ENCODE measurements at regions of chr18 and their contacts with region 1.

Region 1: GRCh38 chr18:32018331-32019250 is at the start of gene RNF125:
- DNase-seq: peak; percentile 84 to 97 (median 89)
- ATAC-seq: peak; percentile 69
- H3K4me3 ChIP-seq: peak within 1 kb of the TSS; percentile 99
- H3K4me3 Mint-ChIP-seq: peak within 1 kb of the TSS; percentile 99
- H3K27ac ChIP-seq: peak within 1 kb of the TSS; percentile 82 to 87
- H3K27ac Mint-ChIP-seq: peak within 1 kb of the TSS; percentile 99
- H3K4me1 ChIP-seq: peaks cover 40% of the 10 kb centered on the region
- H3K4me1 Mint-ChIP-seq: peaks cover 65% of the 10 kb centered on the region
- H3K27me3 ChIP-seq: no peaks in the 10 kb centered on the region
- H3K27me3 Mint-ChIP-seq: no peaks in the 10 kb centered on the region
- CTCF ChIP-seq: no peak
- total RNA-seq, gene RNF125: 107 to 112 TPM

Region 2: DNA sequence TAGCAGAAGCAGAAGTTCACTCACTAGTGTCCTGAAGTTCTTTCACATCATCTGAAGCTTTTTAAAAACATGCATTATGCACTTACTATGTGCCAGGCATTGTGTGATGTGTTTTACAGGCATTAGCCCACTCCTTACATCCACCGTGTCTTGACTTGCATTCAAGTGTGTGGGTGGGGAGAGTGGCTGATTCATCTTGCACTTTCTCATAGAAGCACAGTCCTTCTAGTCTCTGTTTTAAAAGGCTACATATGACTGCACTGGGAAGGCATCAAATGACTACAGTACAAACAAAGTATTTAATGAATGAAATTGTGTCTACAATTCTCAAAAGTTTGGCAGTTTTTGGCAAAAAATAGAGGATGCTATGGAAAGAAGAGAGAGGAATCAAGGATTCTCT is 954.5 kb before region 1 on chr18:
- CTCF ChIA-PET with region 1: no interaction called
- POLR2A ChIA-PET with region 1: no interaction called
- intact Hi-C with region 1: no loop called
- DNase-seq: no peak
- ATAC-seq: no peak
- H3K4me3 ChIP-seq: no peak overlapping the region
- H3K4me3 Mint-ChIP-seq: no peak overlapping the region
- H3K27ac ChIP-seq: no peak overlapping the region
- H3K27ac Mint-ChIP-seq: no peak overlapping the region
- H3K4me1 ChIP-seq: no peaks in the 10 kb centered on the region
- H3K4me1 Mint-ChIP-seq: no peaks in the 10 kb centered on the region
- H3K27me3 ChIP-seq: no peaks in the 10 kb centered on the region
- H3K27me3 Mint-ChIP-seq: no peaks in the 10 kb centered on the region
- CTCF ChIP-seq: no peak

Region 3: GRCh38 chr18:31977270-31977872 is 41.2 kb before region 1 on chr18:
- CTCF ChIA-PET with region 1: interaction called, 3 read pairs
- POLR2A ChIA-PET with region 1: interaction called, 6 read pairs
- intact Hi-C with region 1: loop called in 1 of 2 experiments (anchors 5 kb)
- DNase-seq: peak in 8 of 14 experiments; percentile 4 to 63 (median 32)
- ATAC-seq: no peak
- H3K4me3 ChIP-seq: no peak overlapping the region
- H3K4me3 Mint-ChIP-seq: no peak overlapping the region
- H3K27ac ChIP-seq: no peak overlapping the region
- H3K27ac Mint-ChIP-seq: no peak overlapping the region
- H3K4me1 ChIP-seq: no peaks in the 10 kb centered on the region
- H3K4me1 Mint-ChIP-seq: no peaks in the 10 kb centered on the region
- H3K27me3 ChIP-seq: no peaks in the 10 kb centered on the region
- H3K27me3 Mint-ChIP-seq: no peaks in the 10 kb centered on the region
- CTCF ChIP-seq: peak; percentile 68

Region 4: DNA sequence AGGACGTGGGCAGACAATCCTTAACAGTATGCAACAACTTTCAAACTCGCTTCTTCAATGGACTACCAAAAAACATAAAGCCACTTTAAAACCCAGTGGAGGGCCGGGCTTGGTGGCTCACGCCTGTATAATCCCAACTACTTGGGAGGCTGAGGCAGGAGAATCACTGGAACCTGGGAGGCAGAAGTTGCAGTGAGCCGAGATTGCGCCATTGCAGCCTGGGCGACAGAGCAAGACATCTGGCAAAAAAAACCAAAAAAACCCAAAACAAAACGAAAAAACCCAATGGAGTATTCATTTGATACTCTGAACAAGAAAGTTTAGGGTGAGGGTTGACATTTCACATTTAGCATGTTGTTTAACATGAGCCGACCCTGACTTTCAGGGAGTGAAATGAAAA is 14.0 kb after region 1 on chr18:
- CTCF ChIA-PET with region 1: interaction called, 3 read pairs
- POLR2A ChIA-PET with region 1: interaction called, 108 read pairs
- intact Hi-C with region 1: no loop called
- DNase-seq: no peak
- ATAC-seq: no peak
- H3K4me3 ChIP-seq: no peak overlapping the region
- H3K4me3 Mint-ChIP-seq: no peak overlapping the region
- H3K27ac ChIP-seq: no peak overlapping the region
- H3K27ac Mint-ChIP-seq: peak overlapping the region; percentile 65
- H3K4me1 ChIP-seq: peaks cover 51% of the 10 kb centered on the region
- H3K4me1 Mint-ChIP-seq: peaks cover 88% of the 10 kb centered on the region
- H3K27me3 ChIP-seq: no peaks in the 10 kb centered on the region
- H3K27me3 Mint-ChIP-seq: no peaks in the 10 kb centered on the region
- CTCF ChIP-seq: no peak

Region 5: GRCh38 chr18:32048507-32049091 is 30.0 kb after region 1 on chr18:
- CTCF ChIA-PET with region 1: interaction called, 4 read pairs
- POLR2A ChIA-PET with region 1: interaction called, 31 read pairs
- intact Hi-C with region 1: no loop called
- DNase-seq: peak in 2 of 14 experiments; percentile 41 to 49
- ATAC-seq: peak; percentile 27
- H3K4me3 ChIP-seq: no peak overlapping the region
- H3K4me3 Mint-ChIP-seq: peak overlapping the region; percentile 11
- H3K27ac ChIP-seq: peak overlapping the region in 1 of 2 donors; percentile 56
- H3K27ac Mint-ChIP-seq: peak overlapping the region; percentile 75
- H3K4me1 ChIP-seq: peaks cover 39% of the 10 kb centered on the region
- H3K4me1 Mint-ChIP-seq: peaks cover 50% of the 10 kb centered on the region
- H3K27me3 ChIP-seq: no peaks in the 10 kb centered on the region
- H3K27me3 Mint-ChIP-seq: no peaks in the 10 kb centered on the region
- CTCF ChIP-seq: no peak

Region 6: GRCh38 chr18:32072321-32072720 is 53.7 kb after region 1 on chr18:
- CTCF ChIA-PET with region 1: interaction called, 13 read pairs
- POLR2A ChIA-PET with region 1: interaction called, 56 read pairs
- intact Hi-C with region 1: loop called (anchors 1 to 5 kb)
- DNase-seq: peak in 5 of 14 experiments; percentile 4 to 61 (median 61)
- ATAC-seq: peak; percentile 80
- H3K4me3 ChIP-seq: no peak overlapping the region
- H3K4me3 Mint-ChIP-seq: no peak overlapping the region
- H3K27ac ChIP-seq: no peak overlapping the region
- H3K27ac Mint-ChIP-seq: peak overlapping the region; percentile 35
- H3K4me1 ChIP-seq: no peaks in the 10 kb centered on the region
- H3K4me1 Mint-ChIP-seq: peaks cover 23% of the 10 kb centered on the region
- H3K27me3 ChIP-seq: no peaks in the 10 kb centered on the region
- H3K27me3 Mint-ChIP-seq: no peaks in the 10 kb centered on the region
- CTCF ChIP-seq: peak; percentile 66

Region 7: DNA sequence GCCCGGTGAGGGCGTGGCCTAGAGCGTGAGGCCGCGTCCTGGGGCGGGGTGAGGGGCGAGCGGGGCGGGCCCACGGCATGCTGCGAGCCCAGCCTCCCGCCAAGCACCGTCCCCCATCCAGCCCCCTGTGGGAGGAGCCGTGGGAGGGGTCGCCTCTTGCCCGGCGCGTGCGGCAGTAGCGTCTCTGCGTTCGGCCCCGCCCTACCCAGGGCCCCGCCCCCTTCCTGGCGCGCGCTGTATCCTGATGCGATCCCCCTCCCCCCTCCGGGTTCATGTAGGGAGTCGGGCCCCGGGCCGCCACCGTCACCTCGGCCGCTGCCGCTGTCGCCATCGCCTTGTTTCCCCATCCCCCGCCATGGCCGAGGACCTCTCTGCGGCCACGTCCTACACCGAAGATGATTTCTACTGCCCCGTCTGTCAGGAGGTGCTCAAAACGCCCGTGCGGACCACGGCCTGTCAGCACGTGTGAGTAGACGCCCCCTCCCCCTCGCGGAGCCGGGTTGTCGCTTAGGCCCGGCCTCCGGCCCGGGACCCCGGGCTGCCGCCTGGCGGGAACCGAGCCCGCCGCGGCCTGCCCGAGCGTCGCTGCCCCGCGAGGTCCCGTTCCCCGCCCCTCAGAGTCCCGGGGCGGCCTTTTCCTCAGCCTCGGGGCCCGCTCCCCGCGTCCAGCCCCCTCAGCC is 74.0 kb after region 1 on chr18:
- CTCF ChIA-PET with region 1: interaction called, 11 read pairs
- POLR2A ChIA-PET with region 1: interaction called, 139 read pairs
- intact Hi-C with region 1: loop called (anchors 1 kb)
- DNase-seq: peak; percentile 99 to 100 (median 100)
- ATAC-seq: peak; percentile 87
- H3K4me3 ChIP-seq: peak overlapping the region; percentile 92
- H3K4me3 Mint-ChIP-seq: peak overlapping the region; percentile 100
- H3K27ac ChIP-seq: peak overlapping the region; percentile 98 to 100
- H3K27ac Mint-ChIP-seq: peak overlapping the region; percentile 85
- H3K4me1 ChIP-seq: peaks cover 43% of the 10 kb centered on the region
- H3K4me1 Mint-ChIP-seq: peaks cover 52% of the 10 kb centered on the region
- H3K27me3 ChIP-seq: no peaks in the 10 kb centered on the region
- H3K27me3 Mint-ChIP-seq: no peaks in the 10 kb centered on the region
- CTCF ChIP-seq: no peak

Region 8: GRCh38 chr18:32372381-32373061 is 353.9 kb after region 1 on chr18:
- CTCF ChIA-PET with region 1: no interaction called
- POLR2A ChIA-PET with region 1: no interaction called
- intact Hi-C with region 1: no loop called
- DNase-seq: no peak
- ATAC-seq: no peak
- H3K4me3 ChIP-seq: no peak overlapping the region
- H3K4me3 Mint-ChIP-seq: no peak overlapping the region
- H3K27ac ChIP-seq: no peak overlapping the region
- H3K27ac Mint-ChIP-seq: no peak overlapping the region
- H3K4me1 ChIP-seq: no peaks in the 10 kb centered on the region
- H3K4me1 Mint-ChIP-seq: no peaks in the 10 kb centered on the region
- H3K27me3 ChIP-seq: peaks cover 0 to 3% of the 10 kb centered on the region in 2 experiments
- H3K27me3 Mint-ChIP-seq: peaks cover 24% of the 10 kb centered on the region
- CTCF ChIP-seq: no peak